Vagina (tissue), 2 donors: ENCODE measurements at regions of chr14 and their contacts with region 1.

Region 1: DNA sequence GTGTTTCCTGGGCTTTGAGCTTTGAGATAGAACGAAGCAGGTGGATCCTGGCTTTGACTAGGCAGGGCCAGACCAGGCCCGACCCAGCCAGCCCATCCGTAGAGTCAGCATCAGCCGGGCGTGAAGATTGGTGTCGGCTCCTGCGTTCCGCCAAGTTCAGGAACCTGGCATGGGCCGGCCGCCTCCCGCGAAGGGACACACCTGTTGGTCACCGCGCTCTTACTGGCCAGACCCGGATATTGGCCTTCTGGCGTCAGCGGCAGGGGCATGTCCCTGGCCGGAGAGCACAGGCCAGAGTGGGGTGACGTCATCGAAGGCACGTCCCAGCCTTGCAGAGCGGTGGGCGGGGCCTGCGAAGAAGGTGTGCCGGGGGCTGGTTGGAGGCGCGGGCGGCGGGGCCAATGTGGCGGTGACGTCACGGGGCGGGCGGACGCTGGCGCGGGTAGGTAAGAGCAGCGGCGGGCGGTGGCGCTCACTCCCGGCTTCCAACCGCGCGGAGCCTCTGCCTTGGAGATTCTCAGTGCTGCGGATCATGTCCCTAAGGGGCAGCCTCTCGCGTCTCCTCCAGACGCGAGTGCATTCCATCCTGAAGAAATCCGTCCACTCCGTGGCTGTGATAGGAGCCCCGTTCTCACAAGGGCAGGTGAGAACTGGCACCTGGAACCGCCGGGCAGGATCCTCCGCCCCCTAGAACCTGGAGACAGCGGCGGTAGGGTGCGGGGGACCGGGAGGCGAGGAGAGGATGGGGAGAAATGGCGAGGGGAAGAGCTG is at the start of gene ARG2:
- DNase-seq: peak; percentile 97 to 99
- H3K4me3 ChIP-seq: peak within 1 kb of the TSS; percentile 61 to 75
- H3K27ac ChIP-seq: peak within 1 kb of the TSS; percentile 86
- H3K4me1 ChIP-seq: peaks cover 29% of the 10 kb centered on the region
- H3K27me3 ChIP-seq: no peaks in the 10 kb centered on the region
- CTCF ChIP-seq: no peak
- POLR2A ChIP-seq: peak in 1 of 2 donors; percentile 63
- total RNA-seq, gene ARG2: 14.2 TPM

Region 2: GRCh38 chr14:67666750-67667449 is 47.3 kb after region 1 on chr14:
- intact Hi-C with region 1: loop called (anchors 5 kb)
- DNase-seq: no peak
- H3K4me3 ChIP-seq: no peak overlapping the region
- H3K27ac ChIP-seq: no peak overlapping the region
- H3K4me1 ChIP-seq: peaks cover 7% of the 10 kb centered on the region
- H3K27me3 ChIP-seq: no peaks in the 10 kb centered on the region
- CTCF ChIP-seq: peak in 2 of 3 experiments; percentile 16 to 65
- POLR2A ChIP-seq: no peak